MCF 10A (cell line): ENCODE measurements at regions of chrX and their contacts with region 1.

Region 1: GRCh38 chrX:109294097-109294814 is 187.6 kb downstream of the GUCY2F start:
- DNase-seq: peak; percentile 71
- H3K4me3 Mint-ChIP-seq: no peak overlapping the region
- H3K27ac Mint-ChIP-seq: peak overlapping the region; percentile 13
- H3K4me1 Mint-ChIP-seq: peaks cover 13% of the 10 kb centered on the region
- H3K27me3 Mint-ChIP-seq: peaks cover 61% of the 10 kb centered on the region
- CTCF ChIP-seq: no peak

Region 2: DNA sequence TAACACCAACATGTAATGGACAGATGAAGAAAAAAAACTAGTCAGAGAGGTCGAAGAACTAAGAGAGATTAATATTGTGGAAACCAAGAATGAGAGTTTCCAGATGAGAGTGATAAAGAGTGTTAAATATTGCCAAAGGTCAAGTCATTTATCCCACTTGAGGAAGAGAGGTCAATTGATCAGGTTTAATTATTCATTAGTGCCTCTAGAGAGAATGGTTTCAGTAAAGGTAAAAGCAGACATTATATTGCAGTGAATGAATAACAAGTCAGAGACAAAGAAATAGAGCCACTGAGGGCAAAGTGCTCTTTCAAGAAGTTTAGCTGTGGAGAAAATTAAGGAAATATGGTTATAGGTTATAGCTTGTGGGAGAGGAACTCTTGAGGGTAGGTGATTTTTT is 75.5 kb before region 1 on chrX:
- CTCF ChIA-PET with region 1: no interaction called
- POLR2A ChIA-PET with region 1: no interaction called
- intact Hi-C with region 1: no loop called
- DNase-seq: no peak
- H3K4me3 Mint-ChIP-seq: no peak overlapping the region
- H3K27ac Mint-ChIP-seq: no peak overlapping the region
- H3K4me1 Mint-ChIP-seq: no peaks in the 10 kb centered on the region
- H3K27me3 Mint-ChIP-seq: peaks cover 5% of the 10 kb centered on the region
- CTCF ChIP-seq: no peak

Region 3: GRCh38 chrX:109270580-109271484 is 23.4 kb before region 1 on chrX:
- CTCF ChIA-PET with region 1: no interaction called
- POLR2A ChIA-PET with region 1: interaction called, 3 read pairs
- intact Hi-C with region 1: loop called (anchors 1 kb)
- DNase-seq: peak; percentile 96
- H3K4me3 Mint-ChIP-seq: no peak overlapping the region
- H3K27ac Mint-ChIP-seq: no peak overlapping the region
- H3K4me1 Mint-ChIP-seq: peaks cover 21% of the 10 kb centered on the region
- H3K27me3 Mint-ChIP-seq: peaks cover 77% of the 10 kb centered on the region
- CTCF ChIP-seq: no peak